Tibial artery (tissue), 4 donors: ENCODE measurements at regions of chr11 and their contacts with region 1.

Region 1: GRCh38 chr11:19605520-19606371 is 106.9 kb upstream of the NAV2 start:
- DNase-seq: peak in 1 of 2 donors; percentile 55
- H3K4me3 ChIP-seq: peak overlapping the region in 1 of 2 donors; percentile 12
- H3K27ac ChIP-seq: peak overlapping the region; percentile 76 to 78
- H3K4me1 ChIP-seq: peaks cover 7 to 78% (median 54%) of the 10 kb centered on the region in 4 donors
- H3K27me3 ChIP-seq: no peaks in the 10 kb centered on the region
- CTCF ChIP-seq: peak in 1 of 2 experiments; percentile 5

Region 2: DNA sequence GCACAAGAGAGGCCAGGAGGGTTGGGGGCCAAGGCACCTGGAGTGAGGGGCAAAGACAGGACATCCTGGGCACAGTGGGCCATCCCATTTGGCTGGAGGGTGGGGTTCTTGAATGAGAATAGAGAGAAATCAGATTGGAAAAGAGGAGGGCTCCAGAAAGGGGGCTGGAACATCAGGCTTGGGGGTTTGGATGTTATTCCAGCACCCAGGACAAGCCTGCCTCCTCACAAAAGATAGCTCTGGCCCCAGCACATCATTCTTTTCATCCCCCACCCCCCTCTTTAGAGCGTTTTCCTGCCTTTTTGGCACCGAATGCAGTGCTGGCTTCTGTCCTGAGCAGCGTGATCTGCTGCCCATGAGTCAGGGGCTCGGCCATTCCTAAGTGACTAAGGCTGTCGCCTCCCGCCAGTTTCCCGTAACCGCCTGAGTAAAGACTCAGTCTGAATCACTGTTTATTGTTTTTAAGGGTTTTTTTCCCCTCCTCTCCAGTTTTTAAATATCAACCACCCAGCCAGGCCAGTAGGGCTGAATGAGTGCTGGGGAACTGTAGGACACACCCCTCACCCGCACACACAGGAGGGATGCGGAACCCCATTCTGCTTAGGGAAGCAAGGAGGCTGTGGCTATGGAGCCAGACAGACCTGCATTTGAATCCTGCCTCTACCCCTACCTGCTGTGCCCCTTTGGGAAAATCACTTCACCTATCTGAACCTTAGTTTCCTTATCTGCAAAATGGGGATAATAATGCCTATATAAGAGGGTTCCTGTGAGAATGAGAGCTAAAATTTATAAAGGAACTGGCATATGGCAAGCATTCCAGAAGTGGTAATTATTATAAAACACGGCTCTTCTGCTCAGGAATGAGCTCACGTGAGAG is 74.4 kb after region 1 on chr11:
- intact Hi-C with region 1: loop called (anchors 10 kb)
- DNase-seq: peak; percentile 96 to 98
- H3K4me3 ChIP-seq: no peak overlapping the region
- H3K27ac ChIP-seq: peak overlapping the region; percentile 90 to 91
- H3K4me1 ChIP-seq: peaks cover 0 to 84% (median 60%) of the 10 kb centered on the region in 4 donors
- H3K27me3 ChIP-seq: no peaks in the 10 kb centered on the region
- CTCF ChIP-seq: peak; percentile 25 to 46